ENCODE measurements at regions of chr11 and their contacts with region 1.

Region 1: GRCh38 chr11:69296890-69297786 is 3.2 kb downstream of the MYEOV start:
- DNase-seq: peak; percentile 98
- H3K4me3 ChIP-seq: peak overlapping the region in 1 of 3 experiments; percentile 29
- H3K27ac ChIP-seq: peak overlapping the region; percentile 98
- H3K4me1 ChIP-seq: peaks cover 63% of the 10 kb centered on the region
- H3K27me3 ChIP-seq: no peaks in the 10 kb centered on the region
- CTCF ChIP-seq: no peak
- POLR2A ChIP-seq: no peak

Region 2: GRCh38 chr11:69101115-69101791 is 195.9 kb before region 1 on chr11:
- CTCF ChIA-PET with region 1: interaction called, 5 read pairs
- POLR2A ChIA-PET with region 1: no interaction called
- dilution Hi-C with region 1: no loop called
- intact Hi-C with region 1: loop called (anchors 10 kb)
- DNase-seq: peak; percentile 71
- H3K4me3 ChIP-seq: no peak overlapping the region
- H3K27ac ChIP-seq: no peak overlapping the region
- H3K4me1 ChIP-seq: peaks cover 5% of the 10 kb centered on the region
- H3K27me3 ChIP-seq: peaks cover 0 to 2% of the 10 kb centered on the region in 2 experiments
- CTCF ChIP-seq: peak; percentile 98 to 99
- POLR2A ChIP-seq: peak; percentile 37

Region 3: GRCh38 chr11:69321877-69322361 is 24.8 kb after region 1 on chr11:
- CTCF ChIA-PET with region 1: interaction called, 5 read pairs
- POLR2A ChIA-PET with region 1: interaction called, 6 read pairs
- dilution Hi-C with region 1: no loop called
- intact Hi-C with region 1: loop called (anchors 1 kb)
- DNase-seq: peak; percentile 77
- H3K4me3 ChIP-seq: no peak overlapping the region
- H3K27ac ChIP-seq: peak overlapping the region; percentile 91
- H3K4me1 ChIP-seq: peaks cover 44% of the 10 kb centered on the region
- H3K27me3 ChIP-seq: no peaks in the 10 kb centered on the region
- CTCF ChIP-seq: no peak
- POLR2A ChIP-seq: no peak

Region 4: DNA sequence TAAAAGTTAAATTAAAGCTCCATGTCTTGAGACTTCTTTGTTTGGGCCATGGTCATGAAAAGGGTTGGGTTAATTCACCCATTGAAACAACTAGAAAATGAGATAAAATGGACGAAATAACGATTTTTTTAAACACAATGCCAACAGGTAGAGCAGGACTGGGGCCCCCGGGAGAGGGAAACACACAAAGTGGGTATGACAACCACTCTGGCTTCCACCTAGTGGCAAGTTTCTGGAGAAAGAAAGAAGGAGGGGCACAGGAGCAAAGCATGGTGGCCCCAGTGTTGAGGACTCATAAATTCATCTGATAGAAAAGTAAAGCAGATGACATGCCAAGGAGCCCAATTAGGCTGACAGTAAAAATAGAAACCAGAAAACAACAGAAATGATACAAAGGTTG is 65.2 kb after region 1 on chr11:
- CTCF ChIA-PET with region 1: interaction called, 10 read pairs
- POLR2A ChIA-PET with region 1: no interaction called
- dilution Hi-C with region 1: no loop called
- intact Hi-C with region 1: loop called (anchors 1 kb)
- DNase-seq: no peak
- H3K4me3 ChIP-seq: no peak overlapping the region
- H3K27ac ChIP-seq: no peak overlapping the region
- H3K4me1 ChIP-seq: peaks cover 21% of the 10 kb centered on the region
- H3K27me3 ChIP-seq: no peaks in the 10 kb centered on the region
- CTCF ChIP-seq: no peak
- POLR2A ChIP-seq: no peak

Region 5: GRCh38 chr11:69497221-69497787 is 200.2 kb after region 1 on chr11:
- CTCF ChIA-PET with region 1: interaction called, 6 read pairs
- POLR2A ChIA-PET with region 1: no interaction called
- dilution Hi-C with region 1: no loop called
- intact Hi-C with region 1: loop called (anchors 1 kb)
- DNase-seq: peak; percentile 83
- H3K4me3 ChIP-seq: no peak overlapping the region
- H3K27ac ChIP-seq: peak overlapping the region; percentile 57
- H3K4me1 ChIP-seq: peaks cover 29% of the 10 kb centered on the region
- H3K27me3 ChIP-seq: no peaks in the 10 kb centered on the region
- CTCF ChIP-seq: no peak
- POLR2A ChIP-seq: no peak

Region 6: DNA sequence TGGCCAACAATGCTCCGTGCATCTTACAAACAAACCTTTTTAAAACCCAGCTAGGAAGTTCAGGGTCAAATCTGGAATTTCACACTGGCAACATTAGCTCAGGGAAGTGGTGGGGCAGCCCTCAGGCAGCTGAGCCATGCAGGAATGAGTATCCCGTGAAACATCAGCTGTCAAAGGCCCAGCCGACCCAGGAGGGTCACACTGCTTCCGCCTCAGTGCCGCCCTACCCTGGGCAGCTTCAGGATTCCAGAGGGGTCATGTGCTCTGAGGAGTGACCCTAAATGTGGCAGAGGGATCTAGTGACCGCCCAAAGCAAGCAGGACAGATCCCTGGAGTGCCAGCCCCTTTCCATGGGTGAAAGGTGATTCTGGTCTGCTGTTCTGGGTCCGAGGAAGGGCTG is 257.8 kb after region 1 on chr11:
- CTCF ChIA-PET with region 1: no interaction called
- POLR2A ChIA-PET with region 1: no interaction called
- dilution Hi-C with region 1: no loop called
- intact Hi-C with region 1: no loop called
- DNase-seq: no peak
- H3K4me3 ChIP-seq: no peak overlapping the region
- H3K27ac ChIP-seq: no peak overlapping the region
- H3K4me1 ChIP-seq: no peaks in the 10 kb centered on the region
- H3K27me3 ChIP-seq: peaks cover 0 to 3% of the 10 kb centered on the region in 2 experiments
- CTCF ChIP-seq: no peak
- POLR2A ChIP-seq: no peak